Activated CD4-positive, alpha-beta memory T cell treated with anti-CD3 and anti-CD28 coated beads, Interleukin-2, amount 10 ng/mL, durations not matched to agents 7 days and 5 days (primary cell): ENCODE measurements at regions of chr2 and their contacts with region 1.

Region 1: DNA sequence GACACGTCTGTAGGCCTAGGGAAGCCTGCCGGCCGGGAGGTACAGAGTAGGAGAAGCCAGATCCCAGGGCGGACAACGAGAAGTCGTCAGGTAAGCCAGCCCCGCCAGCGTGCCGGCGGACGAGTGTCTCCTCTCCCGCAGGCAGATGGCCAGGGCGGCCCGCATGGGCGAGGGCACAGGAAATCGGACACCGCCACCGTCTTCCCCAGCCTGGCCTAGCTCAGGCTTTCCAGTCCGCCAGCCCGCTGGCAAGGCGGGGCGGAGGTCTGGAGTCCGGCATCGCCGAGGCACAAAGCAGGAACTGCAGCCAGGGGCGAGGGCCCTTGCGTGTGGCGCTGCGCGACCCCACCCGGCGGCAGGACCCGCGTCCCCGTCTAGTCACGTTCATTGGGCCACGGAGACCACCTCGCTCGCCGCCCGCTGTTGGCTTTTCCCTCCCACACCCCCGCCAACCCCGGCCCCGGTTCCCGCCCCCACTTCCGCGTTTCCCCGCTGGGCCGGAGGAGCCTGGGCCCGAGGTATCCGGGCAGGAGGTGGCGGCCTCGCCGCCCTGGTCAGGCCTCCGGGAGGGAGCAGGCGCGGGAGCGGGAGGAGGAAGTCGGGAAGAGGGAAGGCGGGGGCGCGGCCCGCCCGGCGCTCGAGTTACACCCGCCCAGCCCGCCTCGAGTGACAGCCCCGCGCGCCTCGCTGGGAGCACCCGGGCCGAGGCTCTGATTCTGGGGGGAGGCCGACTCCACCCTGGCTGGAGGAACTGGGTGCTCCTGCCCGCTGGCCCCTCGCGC is at the start of gene GPD2:
- DNase-seq: peak; percentile 64
- H3K4me3 Mint-ChIP-seq: peak within 1 kb of the TSS; percentile 89
- H3K27ac Mint-ChIP-seq: peak within 1 kb of the TSS; percentile 71
- H3K4me1 Mint-ChIP-seq: peaks cover 43% of the 10 kb centered on the region
- H3K27me3 Mint-ChIP-seq: no peaks in the 10 kb centered on the region
- total RNA-seq, gene GPD2: 20.5 to 27.3 TPM

Region 2: DNA sequence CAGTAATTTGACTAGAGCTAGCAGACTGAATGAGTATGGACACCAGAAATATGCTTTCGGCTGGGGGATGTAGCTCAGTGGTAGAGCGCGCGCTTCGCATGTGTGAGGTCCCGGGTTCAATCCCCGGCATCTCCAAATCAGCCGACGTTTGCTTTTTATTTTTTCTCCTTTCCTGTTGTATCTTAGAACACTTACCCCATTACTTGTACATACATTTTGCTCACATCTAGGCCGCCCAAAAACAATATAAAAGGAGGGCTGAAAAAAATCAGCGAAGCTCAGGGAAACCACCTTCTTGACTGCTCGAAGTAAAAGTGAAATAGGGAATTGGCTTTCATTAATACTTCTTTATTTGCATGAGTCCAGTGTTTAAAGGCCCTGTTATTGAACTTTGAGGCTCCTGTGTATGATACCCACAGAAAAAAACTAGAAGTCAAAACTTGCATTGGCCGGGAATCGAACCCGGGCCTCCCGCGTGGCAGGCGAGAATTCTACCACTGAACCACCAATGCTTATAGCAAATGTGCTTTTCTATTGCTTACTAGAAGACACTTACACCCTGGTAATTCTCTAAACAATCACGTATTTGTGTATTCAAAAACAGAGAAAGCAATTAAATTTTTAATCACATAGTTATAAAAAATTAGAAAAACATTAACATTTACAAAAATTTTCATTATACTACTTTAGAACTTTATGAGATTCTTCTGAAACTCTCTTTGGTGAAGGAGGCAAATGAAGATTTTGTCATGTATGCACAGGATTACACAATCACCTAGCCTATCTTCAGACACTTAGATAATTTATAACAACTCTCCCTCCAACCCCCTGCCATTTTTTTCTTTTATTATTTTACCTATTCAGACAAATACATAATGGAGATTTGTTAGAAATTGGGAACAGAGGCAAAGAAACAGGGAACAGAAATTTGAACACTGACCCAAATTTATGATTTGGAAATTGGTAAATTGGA is 34.9 kb before region 1 on chr2:
- CTCF ChIA-PET with region 1: no interaction called
- POLR2A ChIA-PET with region 1: interaction called, 13 read pairs
- DNase-seq: peak; percentile 80
- H3K4me3 Mint-ChIP-seq: peak overlapping the region; percentile 73
- H3K27ac Mint-ChIP-seq: peak overlapping the region; percentile 81
- H3K4me1 Mint-ChIP-seq: peaks cover 30% of the 10 kb centered on the region
- H3K27me3 Mint-ChIP-seq: no peaks in the 10 kb centered on the region